ENCODE measurements at regions of chr3 and their contacts with region 1.

Region 1: GRCh38 chr3:72082186-72082715 is 297.3 kb upstream of the PROK2 start:
- DNase-seq: peak; percentile 96 to 99 (median 97)
- H3K4me3 ChIP-seq: peak overlapping the region in 2 of 3 experiments; percentile 19 to 47
- H3K4me3 Mint-ChIP-seq: peak overlapping the region; percentile 46 to 67
- H3K27ac ChIP-seq: peak overlapping the region; percentile 91 to 98
- H3K27ac Mint-ChIP-seq: peak overlapping the region; percentile 95 to 99 (median 99)
- H3K4me1 ChIP-seq: peaks cover 80 to 93% of the 10 kb centered on the region in 2 donors
- H3K4me1 Mint-ChIP-seq: peaks cover 83% of the 10 kb centered on the region
- H3K27me3 ChIP-seq: no peaks in the 10 kb centered on the region
- H3K27me3 Mint-ChIP-seq: peaks cover 2 to 6% (median 3%) of the 10 kb centered on the region in 3 donors
- CTCF ChIP-seq: no peak

Region 2: GRCh38 chr3:71978150-71978721 is 104.0 kb before region 1 on chr3:
- intact Hi-C with region 1: loop called in 1 of 2 experiments (anchors 5 kb)
- DNase-seq: no peak
- H3K4me3 ChIP-seq: no peak overlapping the region
- H3K4me3 Mint-ChIP-seq: no peak overlapping the region
- H3K27ac ChIP-seq: no peak overlapping the region
- H3K27ac Mint-ChIP-seq: peak overlapping the region in 1 of 7 donors; percentile 52
- H3K4me1 ChIP-seq: peaks cover 15 to 17% of the 10 kb centered on the region in 2 donors
- H3K4me1 Mint-ChIP-seq: peaks cover 34% of the 10 kb centered on the region
- H3K27me3 ChIP-seq: no peaks in the 10 kb centered on the region
- H3K27me3 Mint-ChIP-seq: peaks cover 5 to 8% (median 6%) of the 10 kb centered on the region in 3 donors
- CTCF ChIP-seq: no peak

Region 3: GRCh38 chr3:72031581-72031980 is 50.7 kb before region 1 on chr3:
- intact Hi-C with region 1: loop called in 1 of 2 experiments (anchors 5 kb)
- DNase-seq: peak; percentile 82 to 95 (median 92)
- H3K4me3 ChIP-seq: peak overlapping the region in 1 of 3 experiments; percentile 6
- H3K4me3 Mint-ChIP-seq: peak overlapping the region; percentile 28 to 59
- H3K27ac ChIP-seq: peak overlapping the region in 1 of 2 donors; percentile 50
- H3K27ac Mint-ChIP-seq: peak overlapping the region; percentile 79 to 93 (median 89)
- H3K4me1 ChIP-seq: peaks cover 48 to 53% of the 10 kb centered on the region in 2 donors
- H3K4me1 Mint-ChIP-seq: peaks cover 51% of the 10 kb centered on the region
- H3K27me3 ChIP-seq: no peaks in the 10 kb centered on the region
- H3K27me3 Mint-ChIP-seq: peaks cover 0 to 3% (median 3%) of the 10 kb centered on the region in 3 donors
- CTCF ChIP-seq: peak; percentile 35

Region 4: DNA sequence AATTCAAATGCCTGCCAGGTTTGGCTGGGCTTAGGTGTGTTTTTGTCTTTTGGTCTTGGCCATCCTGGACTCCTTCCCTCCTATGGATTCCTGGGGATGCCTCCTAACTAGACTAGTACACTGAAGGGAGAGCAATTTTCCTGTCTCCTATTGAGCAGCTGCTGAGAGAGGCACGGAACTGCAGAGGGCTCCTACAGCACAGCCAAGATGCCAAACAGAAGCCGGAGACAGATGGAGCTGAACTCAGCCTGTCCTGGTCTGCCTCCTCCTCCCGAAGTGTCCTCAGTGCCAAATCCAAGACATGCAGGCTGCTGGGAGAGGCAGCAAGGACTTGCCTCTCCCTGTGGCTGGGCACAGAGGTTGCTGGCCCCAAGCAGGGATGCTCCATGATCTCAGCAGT is 40.7 kb before region 1 on chr3:
- intact Hi-C with region 1: loop called in 1 of 2 experiments (anchors 5 kb)
- DNase-seq: no peak
- H3K4me3 ChIP-seq: no peak overlapping the region
- H3K4me3 Mint-ChIP-seq: no peak overlapping the region
- H3K27ac ChIP-seq: no peak overlapping the region
- H3K27ac Mint-ChIP-seq: peak overlapping the region in 2 of 7 donors; percentile 28 to 94
- H3K4me1 ChIP-seq: peaks cover 33% of the 10 kb centered on the region in 2 donors
- H3K4me1 Mint-ChIP-seq: peaks cover 37% of the 10 kb centered on the region
- H3K27me3 ChIP-seq: no peaks in the 10 kb centered on the region
- H3K27me3 Mint-ChIP-seq: peaks cover 0 to 3% (median 2%) of the 10 kb centered on the region in 3 donors
- CTCF ChIP-seq: no peak

Region 5: DNA sequence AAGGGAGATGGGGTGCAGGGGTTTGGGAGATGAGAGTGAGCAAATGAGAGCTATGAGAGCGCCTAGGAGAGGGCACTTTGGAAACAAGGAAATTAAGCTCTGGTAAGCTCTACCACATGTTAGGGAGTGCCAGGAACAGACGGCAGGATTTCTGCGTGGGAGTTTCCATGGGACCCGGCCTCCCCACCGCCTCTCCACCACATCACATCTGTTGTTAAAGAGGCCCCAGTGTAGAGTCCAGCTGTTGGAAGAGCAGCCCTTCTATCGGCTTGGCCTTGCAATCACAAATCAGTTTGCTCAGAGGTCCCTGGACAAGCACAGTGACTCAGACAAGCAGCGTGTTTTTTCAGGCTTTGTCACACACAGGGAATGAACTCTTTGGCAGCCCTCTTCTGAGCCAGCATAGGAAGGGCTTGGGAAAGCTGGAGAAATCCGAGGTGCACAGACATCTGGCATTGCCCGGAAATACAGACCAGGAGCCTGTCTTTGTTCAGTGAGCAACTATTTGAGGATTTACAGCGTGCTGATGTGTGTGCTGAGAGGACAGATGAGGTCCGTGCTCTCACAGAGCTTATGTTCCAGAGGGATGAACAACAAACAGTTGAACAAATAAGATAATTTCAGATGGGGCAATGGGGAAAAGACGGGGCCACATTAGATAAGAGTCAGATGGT is 73.3 kb after region 1 on chr3:
- intact Hi-C with region 1: no loop called
- DNase-seq: no peak
- H3K4me3 ChIP-seq: no peak overlapping the region
- H3K4me3 Mint-ChIP-seq: no peak overlapping the region
- H3K27ac ChIP-seq: no peak overlapping the region
- H3K27ac Mint-ChIP-seq: peak overlapping the region in 1 of 7 donors; percentile 2
- H3K4me1 ChIP-seq: no peaks in the 10 kb centered on the region
- H3K4me1 Mint-ChIP-seq: peaks cover 2% of the 10 kb centered on the region
- H3K27me3 ChIP-seq: no peaks in the 10 kb centered on the region
- H3K27me3 Mint-ChIP-seq: peaks cover 4 to 12% (median 5%) of the 10 kb centered on the region in 3 donors
- CTCF ChIP-seq: no peak

Region 6: DNA sequence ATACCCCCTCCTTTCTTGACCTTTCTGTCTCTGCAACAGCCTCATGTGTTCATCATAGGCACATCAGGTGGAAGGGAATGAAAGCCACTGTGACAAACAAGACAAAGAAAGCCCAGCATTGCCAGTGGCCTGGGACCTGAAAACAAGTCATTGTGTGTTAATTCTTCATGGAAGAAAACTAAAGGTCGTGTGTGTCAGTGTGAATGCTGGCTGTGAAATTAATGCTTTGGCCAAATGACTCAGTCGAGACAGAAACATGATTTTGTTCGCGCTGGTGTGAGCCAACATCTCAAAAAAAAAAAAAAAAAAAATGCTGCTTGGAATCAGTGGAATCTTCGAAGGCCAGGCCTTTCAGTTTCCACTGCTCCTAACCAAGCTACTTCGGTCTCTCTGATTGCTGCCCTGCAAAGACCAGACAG is 89.2 kb after region 1 on chr3:
- intact Hi-C with region 1: no loop called
- DNase-seq: no peak
- H3K4me3 ChIP-seq: no peak overlapping the region
- H3K4me3 Mint-ChIP-seq: no peak overlapping the region
- H3K27ac ChIP-seq: no peak overlapping the region
- H3K27ac Mint-ChIP-seq: no peak overlapping the region
- H3K4me1 ChIP-seq: peaks cover 14 to 18% of the 10 kb centered on the region in 2 donors
- H3K4me1 Mint-ChIP-seq: peaks cover 27% of the 10 kb centered on the region
- H3K27me3 ChIP-seq: no peaks in the 10 kb centered on the region
- H3K27me3 Mint-ChIP-seq: peaks cover 13 to 19% (median 17%) of the 10 kb centered on the region in 3 donors
- CTCF ChIP-seq: no peak

Region 7: GRCh38 chr3:72270072-72270681 is 187.9 kb after region 1 on chr3:
- intact Hi-C with region 1: loop called in 1 of 2 experiments (anchors 5 kb)
- DNase-seq: peak; percentile 96 to 99 (median 97)
- H3K4me3 ChIP-seq: peak overlapping the region in 1 of 3 experiments; percentile 25
- H3K4me3 Mint-ChIP-seq: peak overlapping the region in 1 of 2 donors; percentile 69
- H3K27ac ChIP-seq: peak overlapping the region; percentile 75 to 92
- H3K27ac Mint-ChIP-seq: peak overlapping the region; percentile 96 to 98 (median 97)
- H3K4me1 ChIP-seq: peaks cover 64 to 74% of the 10 kb centered on the region in 2 donors
- H3K4me1 Mint-ChIP-seq: peaks cover 84% of the 10 kb centered on the region
- H3K27me3 ChIP-seq: no peaks in the 10 kb centered on the region
- H3K27me3 Mint-ChIP-seq: peaks cover 0 to 7% (median 6%) of the 10 kb centered on the region in 3 donors
- CTCF ChIP-seq: no peak

Measured in CD14-positive monocyte (primary cell).